ENCODE measurements at regions of chr17 and their contacts with region 1.

Region 1: DNA sequence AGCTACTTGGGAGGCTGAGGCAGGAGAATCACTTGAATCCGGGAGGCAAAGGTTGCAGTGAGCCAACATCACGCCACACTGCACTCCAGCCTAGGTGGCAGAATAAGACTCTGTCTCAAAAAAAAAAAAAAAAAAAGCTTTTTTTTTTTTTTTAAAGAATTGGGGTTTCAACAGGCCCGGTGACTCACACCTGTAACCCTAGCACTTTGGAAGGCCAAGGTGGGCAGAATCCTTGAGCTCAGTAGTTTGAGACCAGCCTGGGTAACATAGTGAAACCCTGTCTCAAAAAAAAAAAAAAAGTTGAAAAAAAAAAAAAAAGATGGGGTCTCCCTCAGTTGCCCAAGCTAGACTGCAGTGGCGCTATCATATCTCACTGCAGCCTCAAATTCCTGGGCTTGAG is 6.6 kb upstream of the HEXIM2 start:
- DNase-seq: no peak
- H3K4me3 ChIP-seq: no peak overlapping the region
- H3K27ac ChIP-seq: peak overlapping the region; percentile 12 to 44 (median 20)
- H3K4me1 ChIP-seq: peaks cover 61 to 93% (median 89%) of the 10 kb centered on the region in 4 donors
- H3K27me3 ChIP-seq: no peaks in the 10 kb centered on the region
- CTCF ChIP-seq: no peak
- EP300 ChIP-seq: no peak
- POLR2A ChIP-seq: no peak

Region 2: DNA sequence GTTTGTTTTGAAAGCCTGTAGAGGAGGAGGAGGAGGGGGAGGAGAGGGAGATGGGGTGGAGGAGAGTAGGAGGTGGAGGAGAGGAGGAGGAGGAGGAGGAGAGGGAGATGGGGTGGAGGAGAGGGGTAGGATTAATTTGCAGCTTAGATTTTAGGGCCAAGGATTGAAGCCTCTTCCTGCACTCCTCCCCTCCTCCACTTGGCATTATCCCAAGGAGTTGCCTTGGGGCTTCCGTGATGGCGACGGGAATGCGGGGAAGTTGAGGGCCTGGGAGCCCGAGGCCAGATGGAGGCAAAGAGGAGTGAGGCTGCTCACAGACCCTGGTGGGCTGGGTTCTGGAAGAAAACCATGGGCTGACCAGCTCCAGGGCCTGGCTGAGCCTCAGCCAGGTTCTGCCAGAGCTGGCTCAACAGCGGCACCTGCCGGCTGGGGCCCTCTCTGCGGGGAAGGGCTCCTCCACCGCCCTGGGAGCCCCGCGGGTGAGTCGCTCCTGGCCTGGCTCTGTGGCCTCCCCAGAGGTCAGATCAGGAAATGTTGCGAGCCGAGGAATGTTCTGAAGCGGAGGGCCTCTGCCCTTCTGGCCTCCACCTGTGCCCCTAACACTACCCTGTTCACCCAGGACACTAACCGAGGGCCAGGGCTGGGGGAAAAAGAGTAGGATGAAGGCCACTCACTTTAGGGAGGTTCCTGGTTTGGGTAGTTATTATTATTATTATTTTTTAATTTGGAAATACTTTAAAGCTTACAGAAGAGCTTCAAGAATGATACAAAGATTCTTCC is 42.7 kb after region 1 on chr17:
- intact Hi-C with region 1: loop called (anchors 5 kb)
- DNase-seq: peak; percentile 96
- H3K4me3 ChIP-seq: peak overlapping the region in 3 of 4 donors; percentile 5 to 23 (median 22)
- H3K27ac ChIP-seq: peak overlapping the region; percentile 61 to 74 (median 72)
- H3K4me1 ChIP-seq: peaks cover 8 to 20% (median 16%) of the 10 kb centered on the region in 4 donors
- H3K27me3 ChIP-seq: no peaks in the 10 kb centered on the region
- CTCF ChIP-seq: peak in 2 of 3 experiments; percentile 99
- EP300 ChIP-seq: no peak
- POLR2A ChIP-seq: no peak

Region 3: GRCh38 chr17:45302649-45303173 is 147.7 kb after region 1 on chr17:
- intact Hi-C with region 1: no loop called
- DNase-seq: no peak
- H3K4me3 ChIP-seq: no peak overlapping the region
- H3K27ac ChIP-seq: peak overlapping the region; percentile 72 to 99 (median 86)
- H3K4me1 ChIP-seq: peaks cover 82 to 98% (median 92%) of the 10 kb centered on the region in 4 donors
- H3K27me3 ChIP-seq: no peaks in the 10 kb centered on the region
- CTCF ChIP-seq: no peak
- EP300 ChIP-seq: no peak
- POLR2A ChIP-seq: no peak

Region 4: GRCh38 chr17:45317112-45317928 is 162.3 kb after region 1 on chr17:
- intact Hi-C with region 1: no loop called
- DNase-seq: peak; percentile 100
- H3K4me3 ChIP-seq: peak overlapping the region; percentile 72 to 84 (median 76)
- H3K27ac ChIP-seq: peak overlapping the region; percentile 92 to 99 (median 94)
- H3K4me1 ChIP-seq: peaks cover 42 to 67% (median 62%) of the 10 kb centered on the region in 4 donors
- H3K27me3 ChIP-seq: no peaks in the 10 kb centered on the region
- CTCF ChIP-seq: peak in 1 of 3 experiments; percentile 28
- EP300 ChIP-seq: no peak
- POLR2A ChIP-seq: peak; percentile 35

Measured in esophagus muscularis mucosa (tissue), 4 donors.